Activated CD8-positive, alpha-beta T cell treated with anti-CD3 and anti-CD28 coated beads, Interleukin-2, amount 10 ng/mL, durations not matched to agents 7 days and 5 days (primary cell): ENCODE measurements at regions of chr22 and their contacts with region 1.

Region 1: GRCh38 chr22:20758688-20759087 is 15.2 kb upstream of the SERPIND1 start:
- DNase-seq: no peak
- ATAC-seq: no peak
- H3K4me3 Mint-ChIP-seq: no peak overlapping the region
- H3K27ac Mint-ChIP-seq: no peak overlapping the region
- H3K4me1 Mint-ChIP-seq: no peaks in the 10 kb centered on the region
- H3K27me3 Mint-ChIP-seq: no peaks in the 10 kb centered on the region

Region 2: DNA sequence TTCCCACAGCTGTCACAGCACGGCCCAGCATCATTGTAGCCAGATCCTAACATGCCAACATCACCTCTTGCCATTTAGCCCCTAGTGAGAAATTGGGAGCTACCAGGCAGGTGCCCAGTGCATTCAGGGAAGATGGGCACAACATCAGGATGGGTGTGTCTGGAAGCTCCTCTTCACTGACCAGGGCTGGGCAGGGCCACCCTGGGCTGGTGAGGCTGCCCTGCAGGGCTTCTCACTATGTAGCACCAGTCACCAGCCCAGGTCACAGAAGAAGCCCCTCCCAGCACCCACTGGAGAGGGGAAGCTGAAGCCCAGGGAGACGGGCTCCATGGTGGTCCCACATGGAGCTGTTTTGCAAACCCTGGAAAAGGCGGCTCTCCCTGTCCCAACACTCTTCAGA is 350.9 kb before region 1 on chr22:
- CTCF ChIA-PET with region 1: no interaction called
- POLR2A ChIA-PET with region 1: no interaction called
- DNase-seq: no peak
- ATAC-seq: no peak
- H3K4me3 Mint-ChIP-seq: no peak overlapping the region
- H3K27ac Mint-ChIP-seq: no peak overlapping the region
- H3K4me1 Mint-ChIP-seq: peaks cover 13% of the 10 kb centered on the region
- H3K27me3 Mint-ChIP-seq: no peaks in the 10 kb centered on the region

Region 3: GRCh38 chr22:20652582-20653399 is 105.9 kb before region 1 on chr22:
- CTCF ChIA-PET with region 1: no interaction called
- POLR2A ChIA-PET with region 1: no interaction called
- DNase-seq: no peak
- ATAC-seq: no peak
- H3K4me3 Mint-ChIP-seq: no peak overlapping the region
- H3K27ac Mint-ChIP-seq: no peak overlapping the region
- H3K4me1 Mint-ChIP-seq: no peaks in the 10 kb centered on the region
- H3K27me3 Mint-ChIP-seq: peaks cover 5% of the 10 kb centered on the region

Region 4: GRCh38 chr22:20741634-20742581 is 16.8 kb before region 1 on chr22:
- CTCF ChIA-PET with region 1: interaction called, 12 read pairs
- POLR2A ChIA-PET with region 1: no interaction called
- DNase-seq: peak; percentile 59
- ATAC-seq: peak; percentile 36
- H3K4me3 Mint-ChIP-seq: no peak overlapping the region
- H3K27ac Mint-ChIP-seq: no peak overlapping the region
- H3K4me1 Mint-ChIP-seq: peaks cover 6% of the 10 kb centered on the region
- H3K27me3 Mint-ChIP-seq: no peaks in the 10 kb centered on the region

Region 5: GRCh38 chr22:20771918-20772625 is 13.4 kb after region 1 on chr22:
- CTCF ChIA-PET with region 1: no interaction called
- POLR2A ChIA-PET with region 1: no interaction called
- DNase-seq: no peak
- ATAC-seq: no peak
- H3K4me3 Mint-ChIP-seq: no peak overlapping the region
- H3K27ac Mint-ChIP-seq: no peak overlapping the region
- H3K4me1 Mint-ChIP-seq: peaks cover 11% of the 10 kb centered on the region
- H3K27me3 Mint-ChIP-seq: no peaks in the 10 kb centered on the region